ENCODE measurements at regions of chr4 and their contacts with region 1.

Region 1: DNA sequence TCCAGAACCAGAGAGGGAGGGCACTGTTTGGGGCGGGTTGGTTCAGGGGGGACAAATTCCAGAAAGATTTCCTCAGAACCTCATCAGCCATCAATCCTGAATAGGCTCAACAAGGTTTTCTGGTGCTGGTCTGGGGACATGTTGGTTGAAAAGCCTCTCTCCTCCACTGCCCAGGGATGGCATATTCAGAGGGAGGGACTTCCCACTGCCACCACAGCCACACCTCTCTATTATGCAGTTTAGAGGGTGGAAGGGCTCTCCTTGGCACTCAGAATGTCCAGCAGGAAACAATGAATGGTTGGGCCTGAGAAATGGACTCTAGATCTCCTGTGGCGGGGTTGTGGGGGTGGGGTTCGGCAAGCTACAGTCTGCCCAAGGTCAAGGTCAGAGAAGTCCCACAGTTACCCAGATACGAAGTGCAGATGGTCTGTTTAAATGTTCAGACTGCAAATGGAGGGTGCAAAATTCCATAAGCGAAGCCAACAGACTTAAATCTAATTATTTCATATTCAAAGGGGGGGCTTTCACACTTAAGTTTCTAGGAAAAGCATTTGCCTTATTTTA is 70.7 kb downstream of the LEF1 start:
- DNase-seq: no peak
- H3K4me3 Mint-ChIP-seq: no peak overlapping the region
- H3K27ac Mint-ChIP-seq: peak overlapping the region; percentile 70
- H3K4me1 Mint-ChIP-seq: peaks cover 93% of the 10 kb centered on the region
- H3K27me3 Mint-ChIP-seq: no peaks in the 10 kb centered on the region

Region 2: DNA sequence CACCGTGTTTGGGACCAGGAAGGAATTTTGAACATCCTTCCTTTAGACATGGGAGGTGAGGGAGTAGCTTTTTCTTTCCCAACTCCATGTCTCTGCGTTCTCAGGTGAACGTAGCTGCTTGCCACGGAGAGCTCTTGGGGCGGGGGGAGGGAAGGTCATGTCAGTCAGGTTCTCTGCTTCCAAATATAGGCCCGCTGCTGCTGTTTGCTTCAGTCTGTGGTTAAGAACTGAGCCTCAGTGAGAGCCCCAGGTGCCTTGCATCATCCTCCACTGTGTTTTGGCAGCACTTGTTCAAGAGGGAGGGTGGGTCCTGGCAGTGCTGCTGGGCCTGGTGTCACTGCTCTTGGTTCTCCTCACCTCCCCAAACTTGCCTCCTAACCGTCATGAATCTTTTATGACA is 61.9 kb before region 1 on chr4:
- CTCF ChIA-PET with region 1: interaction called, 4 read pairs
- POLR2A ChIA-PET with region 1: no interaction called
- intact Hi-C with region 1: loop called (anchors 1 kb)
- DNase-seq: peak; percentile 76
- H3K4me3 Mint-ChIP-seq: peak overlapping the region; percentile 35
- H3K27ac Mint-ChIP-seq: peak overlapping the region; percentile 86
- H3K4me1 Mint-ChIP-seq: peaks cover 39% of the 10 kb centered on the region
- H3K27me3 Mint-ChIP-seq: no peaks in the 10 kb centered on the region

Measured in activated CD4-positive, alpha-beta memory T cell treated with anti-CD3 and anti-CD28 coated beads for 36 hours (primary cell).